ENCODE measurements at regions of chr17 and their contacts with region 1.

Region 1: GRCh38 chr17:4806777-4807604 is at the start of gene PLD2:
- DNase-seq: peak; percentile 74 to 91 (median 80)
- ATAC-seq: peak; percentile 95 to 97
- H3K4me3 Mint-ChIP-seq: peak within 1 kb of the TSS; percentile 60 to 90 (median 80)
- H3K27ac Mint-ChIP-seq: peak within 1 kb of the TSS in 5 of 10 donors; percentile 52 to 78 (median 74)
- H3K4me1 Mint-ChIP-seq: peaks cover 0 to 22% (median 8%) of the 10 kb centered on the region in 4 donors
- H3K27me3 Mint-ChIP-seq: no peaks in the 10 kb centered on the region
- polyA plus RNA-seq, gene PLD2: 1.1 to 1.9 (median 1.9) TPM

Region 2: DNA sequence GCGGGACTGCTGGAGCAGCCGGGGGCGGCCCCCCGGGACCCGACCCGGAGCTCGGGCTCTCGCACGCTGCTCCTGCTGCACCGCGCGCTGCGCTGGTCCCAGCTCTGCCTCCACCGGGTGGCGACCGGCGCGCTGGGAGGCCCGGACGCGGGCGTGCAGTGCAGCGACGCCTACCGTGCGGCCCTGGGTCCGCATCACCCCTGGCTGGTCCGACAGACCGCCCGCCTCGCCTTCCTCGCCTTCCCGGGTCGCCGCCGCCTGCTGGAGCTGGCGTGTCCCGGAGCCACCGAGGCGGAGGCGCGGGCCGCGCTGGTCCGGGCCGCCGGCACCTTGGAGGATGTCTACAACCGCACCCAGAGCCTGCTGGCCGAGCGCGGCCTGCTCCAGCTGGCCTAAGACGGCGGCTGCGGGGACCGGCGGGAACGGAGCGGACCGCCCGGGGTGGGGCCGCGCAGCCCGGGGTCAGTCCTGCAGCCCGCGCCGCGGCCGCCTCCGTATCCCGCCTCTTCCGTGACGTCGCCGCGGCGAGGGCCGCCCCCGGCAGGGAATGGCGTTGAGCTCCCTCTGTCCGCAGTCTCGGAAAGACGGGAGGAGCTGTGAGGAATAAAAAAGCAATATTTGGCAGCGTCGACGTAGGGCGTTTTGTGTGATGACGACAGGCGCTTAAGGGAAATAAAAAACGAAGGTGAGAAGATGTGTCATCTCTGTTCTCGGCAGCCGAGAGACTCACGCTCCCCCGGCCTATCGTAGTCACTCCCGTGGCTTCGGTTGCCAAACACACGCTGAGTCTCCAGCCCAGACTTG is 16.9 kb before region 1 on chr17:
- POLR2A ChIA-PET with region 1: interaction called, 18 read pairs
- DNase-seq: peak; percentile 60 to 83 (median 73)
- ATAC-seq: peak; percentile 92
- H3K4me3 Mint-ChIP-seq: peak overlapping the region; percentile 68 to 95 (median 90)
- H3K27ac Mint-ChIP-seq: peak overlapping the region; percentile 57 to 93 (median 84)
- H3K4me1 Mint-ChIP-seq: peaks cover 10 to 40% (median 33%) of the 10 kb centered on the region in 4 donors
- H3K27me3 Mint-ChIP-seq: peaks cover 12 to 34% (median 27%) of the 10 kb centered on the region in 5 donors

Region 3: DNA sequence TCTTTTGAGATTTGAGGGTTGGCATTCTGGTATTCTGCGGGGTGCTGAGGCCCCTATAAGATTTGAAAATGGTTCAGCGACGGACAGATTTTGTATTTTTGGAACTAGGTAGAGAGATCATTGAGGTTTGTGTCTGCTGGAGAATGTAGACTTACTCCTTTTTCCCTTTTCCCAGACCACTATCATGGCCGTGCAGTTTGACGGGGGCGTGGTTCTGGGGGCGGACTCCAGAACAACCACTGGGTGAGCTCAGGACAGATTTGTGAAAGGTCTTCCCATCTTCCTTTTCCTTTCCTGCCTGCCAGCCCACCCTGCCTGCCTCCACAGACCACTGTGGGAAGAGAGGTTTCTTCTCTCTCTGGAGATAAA is 10.5 kb before region 1 on chr17:
- POLR2A ChIA-PET with region 1: interaction called, 20 read pairs
- DNase-seq: no peak
- ATAC-seq: no peak
- H3K4me3 Mint-ChIP-seq: peak overlapping the region; percentile 97 to 100 (median 100)
- H3K27ac Mint-ChIP-seq: peak overlapping the region; percentile 97 to 99 (median 99)
- H3K4me1 Mint-ChIP-seq: peaks cover 8 to 17% (median 16%) of the 10 kb centered on the region in 4 donors
- H3K27me3 Mint-ChIP-seq: peaks cover 0 to 5% (median 0%) of the 10 kb centered on the region in 5 donors

Measured in naive thymus-derived CD8-positive, alpha-beta T cell (primary cell).